MCF 10A (cell line): ENCODE measurements at regions of chr2 and their contacts with region 1.

Region 1: DNA sequence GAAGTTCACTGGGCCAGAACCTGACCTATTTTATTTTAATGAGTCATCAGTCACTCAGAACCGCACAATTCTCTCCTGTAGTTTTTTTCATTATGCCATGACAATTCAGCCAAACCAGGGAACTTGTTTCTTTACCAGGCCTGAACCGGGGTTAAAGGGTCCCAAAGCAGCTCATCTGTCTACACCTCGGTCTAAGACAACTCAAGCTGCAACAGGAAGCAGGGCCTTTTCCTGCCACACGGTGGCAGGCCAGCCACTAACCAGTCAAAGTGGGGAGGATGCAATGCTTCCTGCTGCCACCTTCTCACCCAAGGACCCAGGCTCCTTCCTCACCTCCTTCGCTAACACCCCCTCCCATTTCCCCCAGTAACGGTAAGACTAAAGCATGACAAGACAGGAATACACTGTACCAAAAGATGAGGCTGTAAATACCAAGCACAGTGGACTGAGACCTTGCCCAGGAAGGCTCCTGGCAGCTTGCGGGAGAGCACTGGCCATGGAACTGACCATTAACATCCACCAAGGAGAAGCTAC is 56.7 kb upstream of the ACKR3 start:
- DNase-seq: peak; percentile 50
- H3K4me3 Mint-ChIP-seq: no peak overlapping the region
- H3K27ac Mint-ChIP-seq: no peak overlapping the region
- H3K4me1 Mint-ChIP-seq: no peaks in the 10 kb centered on the region
- H3K27me3 Mint-ChIP-seq: no peaks in the 10 kb centered on the region
- CTCF ChIP-seq: peak; percentile 77

Region 2: GRCh38 chr2:236498369-236498768 is 14.6 kb before region 1 on chr2:
- CTCF ChIA-PET with region 1: interaction called, 10 read pairs
- POLR2A ChIA-PET with region 1: no interaction called
- intact Hi-C with region 1: no loop called
- DNase-seq: no peak
- H3K4me3 Mint-ChIP-seq: no peak overlapping the region
- H3K27ac Mint-ChIP-seq: no peak overlapping the region
- H3K4me1 Mint-ChIP-seq: no peaks in the 10 kb centered on the region
- H3K27me3 Mint-ChIP-seq: no peaks in the 10 kb centered on the region
- CTCF ChIP-seq: no peak

Region 3: DNA sequence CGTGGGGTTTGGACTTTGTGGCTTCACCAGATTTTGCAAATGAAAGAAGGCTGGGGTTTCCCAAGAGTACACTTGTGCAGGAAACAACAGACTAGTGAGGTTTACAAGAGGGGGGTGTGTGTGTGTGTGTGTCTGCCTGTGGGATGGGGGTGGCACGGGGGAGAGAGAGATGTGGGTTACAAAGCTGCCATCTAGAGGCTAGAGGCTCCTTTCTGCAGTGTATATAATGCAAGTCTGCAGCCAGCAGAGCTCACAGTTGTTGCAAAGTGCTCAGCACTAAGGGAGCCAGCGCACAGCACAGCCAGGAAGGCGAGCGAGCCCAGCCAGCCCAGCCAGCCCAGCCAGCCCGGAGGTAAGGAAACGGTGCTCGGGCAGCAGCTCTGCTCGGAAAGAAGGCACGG is 56.6 kb after region 1 on chr2 and contains the start of gene ACKR3:
- CTCF ChIA-PET with region 1: interaction called, 16 read pairs
- POLR2A ChIA-PET with region 1: no interaction called
- intact Hi-C with region 1: loop called (anchors 1 kb)
- DNase-seq: peak; percentile 51
- H3K4me3 Mint-ChIP-seq: peak within 1 kb of the TSS; percentile 36
- H3K27ac Mint-ChIP-seq: no peak within 1 kb of the TSS
- H3K4me1 Mint-ChIP-seq: peaks cover 6% of the 10 kb centered on the region
- H3K27me3 Mint-ChIP-seq: peaks cover 15% of the 10 kb centered on the region
- CTCF ChIP-seq: peak; percentile 20
- total RNA-seq, gene ACKR3: 0.29 and 0.61 TPM in 2 replicates

Region 4: GRCh38 chr2:237026981-237027711 is 514.2 kb after region 1 on chr2:
- CTCF ChIA-PET with region 1: interaction called, 98 read pairs
- POLR2A ChIA-PET with region 1: no interaction called
- intact Hi-C with region 1: loop called (anchors 1 kb)
- DNase-seq: peak; percentile 74
- H3K4me3 Mint-ChIP-seq: no peak overlapping the region
- H3K27ac Mint-ChIP-seq: no peak overlapping the region
- H3K4me1 Mint-ChIP-seq: no peaks in the 10 kb centered on the region
- H3K27me3 Mint-ChIP-seq: no peaks in the 10 kb centered on the region
- CTCF ChIP-seq: peak; percentile 88